Naive thymus-derived CD4-positive, alpha-beta T cell (primary cell): ENCODE measurements at regions of chr2 and their contacts with region 1.

Region 1: DNA sequence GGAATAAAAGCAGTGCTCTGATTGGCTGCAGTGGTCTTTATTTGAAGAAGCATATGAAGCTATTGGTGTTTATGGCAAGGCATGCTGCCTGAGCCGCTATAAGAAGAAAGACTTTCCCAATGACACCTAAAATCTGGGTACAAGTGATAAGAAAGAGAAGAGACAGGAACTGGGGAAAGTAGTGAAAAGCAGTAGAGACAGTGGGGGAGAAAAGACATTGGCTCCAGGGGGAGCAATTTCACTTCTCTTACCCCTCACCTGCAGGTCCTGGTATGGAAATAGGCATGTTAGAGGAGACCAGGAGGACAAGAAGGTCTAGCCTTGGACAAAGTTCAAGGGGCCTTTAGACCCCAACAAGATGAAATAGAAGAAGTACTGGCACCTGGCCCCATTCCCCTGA is 47.1 kb downstream of the PLCL1 start:
- DNase-seq: no peak
- ATAC-seq: no peak
- H3K4me3 ChIP-seq: no peak overlapping the region
- H3K4me3 Mint-ChIP-seq: peak overlapping the region in 7 of 10 donors; percentile 3 to 80 (median 29)
- H3K27ac ChIP-seq: no peak overlapping the region
- H3K27ac Mint-ChIP-seq: peak overlapping the region in 8 of 9 donors; percentile 60 to 100 (median 98)
- H3K4me1 ChIP-seq: peaks cover 4 to 76% of the 10 kb centered on the region in 2 donors
- H3K4me1 Mint-ChIP-seq: peaks cover 29 to 100% (median 93%) of the 10 kb centered on the region in 7 donors
- H3K27me3 ChIP-seq: no peaks in the 10 kb centered on the region
- H3K27me3 Mint-ChIP-seq: no peaks in the 10 kb centered on the region

Region 2: GRCh38 chr2:197813093-197813787 is 38.2 kb before region 1 on chr2:
- CTCF ChIA-PET with region 1: interaction called, 7 read pairs
- POLR2A ChIA-PET with region 1: interaction called, 9 read pairs
- intact Hi-C with region 1: loop called in 1 of 2 experiments (anchors 1 kb)
- DNase-seq: no peak
- ATAC-seq: peak; percentile 58
- H3K4me3 ChIP-seq: no peak overlapping the region
- H3K4me3 Mint-ChIP-seq: no peak overlapping the region
- H3K27ac ChIP-seq: no peak overlapping the region
- H3K27ac Mint-ChIP-seq: peak overlapping the region in 1 of 9 donors; percentile 51
- H3K4me1 ChIP-seq: peaks cover 0 to 40% of the 10 kb centered on the region in 2 donors
- H3K4me1 Mint-ChIP-seq: peaks cover 17 to 86% (median 76%) of the 10 kb centered on the region in 7 donors
- H3K27me3 ChIP-seq: no peaks in the 10 kb centered on the region
- H3K27me3 Mint-ChIP-seq: no peaks in the 10 kb centered on the region

Region 3: DNA sequence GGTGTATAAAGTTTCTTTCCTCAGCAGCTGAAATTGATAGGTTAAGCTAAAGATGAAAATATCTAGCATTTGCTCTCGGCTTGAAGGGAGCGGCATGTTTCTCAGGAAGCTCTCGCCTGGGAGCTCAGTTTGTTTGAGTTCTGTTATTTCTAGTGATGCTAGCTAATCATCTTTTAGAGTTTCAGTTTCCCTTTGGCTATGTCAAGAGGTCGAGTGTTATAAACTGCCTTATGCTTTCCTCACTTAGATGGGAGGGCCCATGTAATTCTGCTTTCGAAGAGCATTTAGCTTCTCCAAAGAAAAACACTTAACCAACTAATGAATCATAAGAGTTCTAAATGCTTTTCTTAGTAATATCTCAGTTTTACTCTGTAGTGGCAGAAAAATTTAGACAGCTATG is 13.4 kb before region 1 on chr2:
- CTCF ChIA-PET with region 1: interaction called, 12 read pairs
- POLR2A ChIA-PET with region 1: interaction called, 21 read pairs
- intact Hi-C with region 1: loop called (anchors 1 kb)
- DNase-seq: peak in 7 of 9 donors; percentile 41 to 71 (median 59)
- ATAC-seq: peak; percentile 88
- H3K4me3 ChIP-seq: peak overlapping the region; percentile 31
- H3K4me3 Mint-ChIP-seq: peak overlapping the region; percentile 65 to 84 (median 80)
- H3K27ac ChIP-seq: peak overlapping the region; percentile 75
- H3K27ac Mint-ChIP-seq: peak overlapping the region; percentile 79 to 98 (median 94)
- H3K4me1 ChIP-seq: peaks cover 0 to 55% of the 10 kb centered on the region in 2 donors
- H3K4me1 Mint-ChIP-seq: peaks cover 28 to 88% (median 67%) of the 10 kb centered on the region in 7 donors
- H3K27me3 ChIP-seq: no peaks in the 10 kb centered on the region
- H3K27me3 Mint-ChIP-seq: no peaks in the 10 kb centered on the region

Region 4: GRCh38 chr2:197867624-197868023 is 16.2 kb after region 1 on chr2:
- CTCF ChIA-PET with region 1: interaction called, 8 read pairs
- POLR2A ChIA-PET with region 1: interaction called, 17 read pairs
- intact Hi-C with region 1: loop called (anchors 1 to 2 kb)
- DNase-seq: no peak
- ATAC-seq: no peak
- H3K4me3 ChIP-seq: peak overlapping the region; percentile 11
- H3K4me3 Mint-ChIP-seq: peak overlapping the region in 9 of 10 donors; percentile 5 to 90 (median 34)
- H3K27ac ChIP-seq: peak overlapping the region; percentile 75
- H3K27ac Mint-ChIP-seq: peak overlapping the region in 8 of 9 donors; percentile 93 to 99 (median 96)
- H3K4me1 ChIP-seq: peaks cover 0 to 56% of the 10 kb centered on the region in 2 donors
- H3K4me1 Mint-ChIP-seq: peaks cover 39 to 90% (median 85%) of the 10 kb centered on the region in 7 donors
- H3K27me3 ChIP-seq: no peaks in the 10 kb centered on the region
- H3K27me3 Mint-ChIP-seq: no peaks in the 10 kb centered on the region

Region 5: DNA sequence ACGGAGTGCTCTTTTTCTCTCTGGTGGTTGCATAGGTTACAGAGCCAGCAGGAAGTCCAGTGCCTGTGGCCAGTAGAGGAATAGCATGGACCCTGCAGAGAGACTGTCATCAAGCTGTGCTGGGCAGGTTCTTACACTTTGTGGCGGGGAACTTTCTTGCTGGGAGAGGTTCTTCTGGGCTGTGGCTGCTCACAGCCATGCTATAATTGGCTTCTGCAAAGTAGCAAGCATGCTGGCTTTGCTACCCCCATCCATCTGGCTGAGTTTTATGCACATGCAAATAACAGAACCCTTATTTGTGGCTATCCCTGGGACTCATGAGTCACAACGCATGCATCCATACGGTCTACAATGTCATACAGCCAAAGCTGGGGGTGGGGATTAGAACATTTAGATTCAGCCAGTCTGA is 21.8 kb after region 1 on chr2:
- CTCF ChIA-PET with region 1: interaction called, 5 read pairs
- POLR2A ChIA-PET with region 1: interaction called, 17 read pairs
- intact Hi-C with region 1: loop called (anchors 1 to 2 kb)
- DNase-seq: no peak
- ATAC-seq: no peak
- H3K4me3 ChIP-seq: no peak overlapping the region
- H3K4me3 Mint-ChIP-seq: peak overlapping the region in 1 of 10 donors; percentile 33
- H3K27ac ChIP-seq: no peak overlapping the region
- H3K27ac Mint-ChIP-seq: peak overlapping the region in 3 of 9 donors; percentile 28 to 62 (median 47)
- H3K4me1 ChIP-seq: peaks cover 0 to 34% of the 10 kb centered on the region in 2 donors
- H3K4me1 Mint-ChIP-seq: peaks cover 29 to 92% (median 85%) of the 10 kb centered on the region in 7 donors
- H3K27me3 ChIP-seq: no peaks in the 10 kb centered on the region
- H3K27me3 Mint-ChIP-seq: no peaks in the 10 kb centered on the region

Region 6: GRCh38 chr2:198053776-198054698 is 202.6 kb after region 1 on chr2:
- CTCF ChIA-PET with region 1: interaction called, 3 read pairs
- POLR2A ChIA-PET with region 1: no interaction called
- intact Hi-C with region 1: loop called (anchors 1 kb)
- DNase-seq: peak in 8 of 9 donors; percentile 23 to 62 (median 44)
- ATAC-seq: peak; percentile 77
- H3K4me3 ChIP-seq: no peak overlapping the region
- H3K4me3 Mint-ChIP-seq: no peak overlapping the region
- H3K27ac ChIP-seq: no peak overlapping the region
- H3K27ac Mint-ChIP-seq: peak overlapping the region in 4 of 9 donors; percentile 17 to 46 (median 30)
- H3K4me1 ChIP-seq: no peaks in the 10 kb centered on the region
- H3K4me1 Mint-ChIP-seq: peaks cover 3 to 67% (median 36%) of the 10 kb centered on the region in 7 donors
- H3K27me3 ChIP-seq: no peaks in the 10 kb centered on the region
- H3K27me3 Mint-ChIP-seq: no peaks in the 10 kb centered on the region

Region 7: DNA sequence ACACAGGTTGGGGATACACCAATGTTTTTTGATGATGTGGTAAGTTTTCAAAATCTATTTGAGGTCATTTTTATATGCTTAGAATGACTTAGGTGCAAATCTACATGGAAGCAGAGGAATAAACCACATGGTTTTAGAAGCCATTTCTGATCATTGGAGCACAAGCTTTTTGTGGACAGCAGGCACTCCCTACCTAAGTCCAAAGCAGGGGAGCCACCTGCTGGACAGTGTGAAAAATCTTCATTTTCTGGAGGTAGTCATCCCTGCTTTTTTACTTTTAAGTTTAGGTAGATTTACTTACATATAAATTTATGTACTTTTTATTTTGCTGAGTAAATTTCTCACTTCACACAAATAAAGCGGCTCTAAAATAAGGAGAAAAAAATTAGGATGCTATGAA is 276.2 kb after region 1 on chr2:
- CTCF ChIA-PET with region 1: interaction called, 4 read pairs
- POLR2A ChIA-PET with region 1: interaction called, 3 read pairs
- intact Hi-C with region 1: loop called (anchors 1 kb)
- DNase-seq: peak in 8 of 9 donors; percentile 24 to 66 (median 48)
- ATAC-seq: peak; percentile 81
- H3K4me3 ChIP-seq: no peak overlapping the region
- H3K4me3 Mint-ChIP-seq: no peak overlapping the region
- H3K27ac ChIP-seq: no peak overlapping the region
- H3K27ac Mint-ChIP-seq: peak overlapping the region in 1 of 9 donors; percentile 10
- H3K4me1 ChIP-seq: no peaks in the 10 kb centered on the region
- H3K4me1 Mint-ChIP-seq: peaks cover 0 to 21% (median 11%) of the 10 kb centered on the region in 7 donors
- H3K27me3 ChIP-seq: no peaks in the 10 kb centered on the region
- H3K27me3 Mint-ChIP-seq: peaks cover 0 to 3% (median 0%) of the 10 kb centered on the region in 5 donors